CD14-positive monocyte (primary cell): ENCODE measurements at regions of chr5 and their contacts with region 1.

Region 1: DNA sequence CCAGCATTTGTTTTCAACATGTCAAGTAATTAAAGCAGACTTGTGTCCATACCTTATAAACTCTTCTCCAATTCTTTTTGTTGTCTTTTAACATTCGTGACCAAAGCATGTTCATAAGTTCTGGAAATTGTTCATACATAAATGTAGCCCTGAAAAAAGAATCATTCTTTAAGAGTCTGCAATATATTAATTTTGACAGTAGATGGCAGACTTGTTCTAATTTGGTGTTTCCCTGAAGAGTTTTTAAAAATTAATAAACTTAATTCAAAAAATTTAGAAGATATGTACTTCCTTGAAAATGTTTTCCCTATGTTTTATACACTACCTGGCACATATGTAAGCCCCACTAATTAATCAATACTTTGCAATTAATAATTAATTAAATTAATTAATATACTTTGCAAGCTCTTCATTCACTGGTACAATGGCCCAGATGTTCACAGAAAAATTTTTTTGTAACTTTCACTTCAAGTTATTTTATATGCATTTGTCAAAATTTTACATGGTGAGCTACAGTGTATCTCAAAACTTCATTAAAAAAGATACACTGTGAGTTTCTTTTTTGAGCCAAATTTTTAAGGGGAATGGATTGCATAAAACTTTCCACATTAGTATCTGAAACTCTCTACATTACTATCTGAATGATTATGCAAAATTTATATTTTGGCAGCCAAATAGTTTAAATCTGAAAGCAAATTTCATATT is 42.1 kb downstream of the CLINT1 start:
- DNase-seq: peak in 1 of 3 donors; percentile 2
- H3K4me3 ChIP-seq: no peak overlapping the region
- H3K4me3 Mint-ChIP-seq: no peak overlapping the region
- H3K27ac ChIP-seq: no peak overlapping the region
- H3K27ac Mint-ChIP-seq: no peak overlapping the region
- H3K4me1 ChIP-seq: peaks cover 0 to 3% of the 10 kb centered on the region in 2 donors
- H3K4me1 Mint-ChIP-seq: peaks cover 9% of the 10 kb centered on the region
- H3K27me3 ChIP-seq: no peaks in the 10 kb centered on the region
- H3K27me3 Mint-ChIP-seq: no peaks in the 10 kb centered on the region
- CTCF ChIP-seq: peak; percentile 79

Region 2: GRCh38 chr5:157948738-157949410 is 132.0 kb after region 1 on chr5:
- intact Hi-C with region 1: loop called (anchors 2 kb)
- DNase-seq: peak; percentile 74 to 80 (median 79)
- H3K4me3 ChIP-seq: no peak overlapping the region
- H3K4me3 Mint-ChIP-seq: peak overlapping the region in 1 of 2 donors; percentile 65
- H3K27ac ChIP-seq: no peak overlapping the region
- H3K27ac Mint-ChIP-seq: no peak overlapping the region
- H3K4me1 ChIP-seq: no peaks in the 10 kb centered on the region
- H3K4me1 Mint-ChIP-seq: peaks cover 5% of the 10 kb centered on the region
- H3K27me3 ChIP-seq: no peaks in the 10 kb centered on the region
- H3K27me3 Mint-ChIP-seq: peaks cover 0 to 2% (median 0%) of the 10 kb centered on the region in 3 donors
- CTCF ChIP-seq: peak; percentile 78